Endothelial cell of umbilical vein (primary cell): ENCODE measurements at regions of chr22 and their contacts with region 1.

Region 1: GRCh38 chr22:36486619-36487384 is 5.4 kb upstream of the TXN2 start:
- DNase-seq: peak; percentile 43
- H3K4me3 ChIP-seq: no peak overlapping the region
- H3K27ac ChIP-seq: no peak overlapping the region
- H3K4me1 ChIP-seq: no peaks in the 10 kb centered on the region
- H3K27me3 ChIP-seq: no peaks in the 10 kb centered on the region
- CTCF ChIP-seq: peak; percentile 51 to 70
- POLR2A ChIP-seq: no peak

Region 2: GRCh38 chr22:36144886-36145541 is 341.8 kb before region 1 on chr22:
- CTCF ChIA-PET with region 1: interaction called, 10 read pairs
- POLR2A ChIA-PET with region 1: no interaction called
- dilution Hi-C with region 1: no loop called
- intact Hi-C with region 1: loop called (anchors 5 kb)
- DNase-seq: peak; percentile 77
- H3K4me3 ChIP-seq: no peak overlapping the region
- H3K27ac ChIP-seq: no peak overlapping the region
- H3K4me1 ChIP-seq: no peaks in the 10 kb centered on the region
- H3K27me3 ChIP-seq: peaks cover 0 to 2% of the 10 kb centered on the region in 2 experiments
- CTCF ChIP-seq: peak; percentile 80 to 83
- POLR2A ChIP-seq: no peak

Region 3: DNA sequence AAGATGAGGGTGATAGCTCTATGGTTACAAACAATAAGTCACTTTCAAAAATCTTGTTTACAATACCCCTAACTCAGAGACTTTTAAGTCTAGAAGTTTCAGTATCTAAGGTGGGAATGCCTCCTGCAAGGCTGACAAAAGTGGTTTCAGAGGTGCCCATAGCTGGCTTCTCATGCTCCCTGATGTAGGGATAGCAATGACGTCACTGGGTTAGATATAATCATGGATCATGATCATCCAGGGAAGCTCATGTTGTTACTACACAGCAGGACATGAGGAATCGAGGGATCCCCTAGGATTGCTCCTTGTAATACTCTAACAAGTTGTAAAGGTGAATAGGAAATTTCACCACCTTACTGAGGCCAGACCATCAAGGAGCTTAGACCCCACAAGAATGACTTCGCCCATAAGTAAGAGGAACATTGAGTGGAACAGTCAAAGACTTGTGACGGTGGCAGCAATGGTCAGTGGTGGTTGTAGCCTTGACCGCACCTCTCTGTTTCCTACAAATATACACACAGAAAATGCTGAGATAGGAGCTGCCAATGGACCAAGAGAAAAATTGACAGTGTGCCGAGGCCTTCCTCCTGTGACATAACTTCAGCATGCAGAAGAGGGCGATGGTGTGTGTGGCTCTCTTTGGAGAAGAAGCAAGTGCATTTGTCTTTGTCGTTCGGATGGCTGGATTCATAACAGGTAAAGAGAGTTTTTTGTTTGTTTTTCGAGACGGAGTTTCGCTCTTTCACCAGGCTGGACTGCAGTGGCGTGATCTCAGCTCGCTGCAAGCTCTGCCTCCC is 300.8 kb before region 1 on chr22:
- CTCF ChIA-PET with region 1: interaction called, 17 read pairs
- POLR2A ChIA-PET with region 1: no interaction called
- dilution Hi-C with region 1: no loop called
- intact Hi-C with region 1: no loop called
- DNase-seq: no peak
- H3K4me3 ChIP-seq: no peak overlapping the region
- H3K27ac ChIP-seq: no peak overlapping the region
- H3K4me1 ChIP-seq: no peaks in the 10 kb centered on the region
- H3K27me3 ChIP-seq: peaks cover 3 to 5% of the 10 kb centered on the region in 2 experiments
- CTCF ChIP-seq: no peak
- POLR2A ChIP-seq: no peak

Region 4: GRCh38 chr22:36201630-36202319 is 285.0 kb before region 1 on chr22 and contains the start of gene APOL4:
- CTCF ChIA-PET with region 1: interaction called, 48 read pairs
- POLR2A ChIA-PET with region 1: no interaction called
- dilution Hi-C with region 1: no loop called
- intact Hi-C with region 1: loop called (anchors 1 kb)
- DNase-seq: no peak
- H3K4me3 ChIP-seq: no peak within 1 kb of the TSS
- H3K27ac ChIP-seq: no peak within 1 kb of the TSS
- H3K4me1 ChIP-seq: peaks cover 16% of the 10 kb centered on the region
- H3K27me3 ChIP-seq: peaks cover 0 to 2% of the 10 kb centered on the region in 2 experiments
- CTCF ChIP-seq: no peak
- POLR2A ChIP-seq: no peak
- total RNA-seq, gene APOL4: 0.97 and 2.6 TPM in 2 replicates

Region 5: GRCh38 chr22:36277482-36278291 is 209.1 kb before region 1 on chr22:
- CTCF ChIA-PET with region 1: interaction called, 16 read pairs
- POLR2A ChIA-PET with region 1: no interaction called
- dilution Hi-C with region 1: no loop called
- intact Hi-C with region 1: no loop called
- DNase-seq: peak; percentile 59
- H3K4me3 ChIP-seq: no peak overlapping the region
- H3K27ac ChIP-seq: no peak overlapping the region
- H3K4me1 ChIP-seq: no peaks in the 10 kb centered on the region
- H3K27me3 ChIP-seq: no peaks in the 10 kb centered on the region
- CTCF ChIP-seq: peak; percentile 65 to 88
- POLR2A ChIP-seq: peak; percentile 18

Region 6: DNA sequence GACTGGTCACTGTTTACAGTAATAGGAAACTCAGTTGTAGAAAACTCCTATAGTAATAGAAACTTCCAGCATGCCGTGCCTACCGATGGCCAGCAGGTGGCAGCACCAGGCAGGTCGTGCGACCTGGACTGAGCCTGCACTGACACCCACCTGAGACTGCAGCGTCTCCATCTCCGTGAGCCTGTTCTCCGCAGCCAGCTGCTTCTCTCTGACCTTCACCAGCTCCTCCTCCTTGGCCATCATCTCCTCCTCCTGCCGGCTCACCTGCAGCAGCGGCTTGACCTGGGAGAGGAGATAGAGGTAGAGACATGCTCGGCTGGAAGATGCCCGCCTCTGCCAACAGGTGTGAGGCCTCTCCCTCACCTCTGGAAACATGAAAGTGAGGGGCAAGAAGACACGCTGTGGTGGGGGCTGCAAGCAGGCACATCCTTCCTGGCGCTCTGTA is 185.4 kb before region 1 on chr22:
- CTCF ChIA-PET with region 1: interaction called, 38 read pairs
- POLR2A ChIA-PET with region 1: no interaction called
- dilution Hi-C with region 1: no loop called
- intact Hi-C with region 1: no loop called
- DNase-seq: peak; percentile 60
- H3K4me3 ChIP-seq: no peak overlapping the region
- H3K27ac ChIP-seq: no peak overlapping the region
- H3K4me1 ChIP-seq: peaks cover 10% of the 10 kb centered on the region
- H3K27me3 ChIP-seq: no peaks in the 10 kb centered on the region
- CTCF ChIP-seq: peak; percentile 88
- POLR2A ChIP-seq: no peak